Dorsolateral prefrontal cortex (tissue), 120 donors: ENCODE measurements at regions of chr12 and their contacts with region 1.

Region 1: GRCh38 chr12:57118711-57119271 is 7.6 kb upstream of the STAT6 start:
- DNase-seq: no peak
- H3K4me3 ChIP-seq: no peak overlapping the region
- H3K27ac ChIP-seq: no peak overlapping the region
- H3K27me3 ChIP-seq: no peaks in the 10 kb centered on the region
- CTCF ChIP-seq: no peak

Region 2: DNA sequence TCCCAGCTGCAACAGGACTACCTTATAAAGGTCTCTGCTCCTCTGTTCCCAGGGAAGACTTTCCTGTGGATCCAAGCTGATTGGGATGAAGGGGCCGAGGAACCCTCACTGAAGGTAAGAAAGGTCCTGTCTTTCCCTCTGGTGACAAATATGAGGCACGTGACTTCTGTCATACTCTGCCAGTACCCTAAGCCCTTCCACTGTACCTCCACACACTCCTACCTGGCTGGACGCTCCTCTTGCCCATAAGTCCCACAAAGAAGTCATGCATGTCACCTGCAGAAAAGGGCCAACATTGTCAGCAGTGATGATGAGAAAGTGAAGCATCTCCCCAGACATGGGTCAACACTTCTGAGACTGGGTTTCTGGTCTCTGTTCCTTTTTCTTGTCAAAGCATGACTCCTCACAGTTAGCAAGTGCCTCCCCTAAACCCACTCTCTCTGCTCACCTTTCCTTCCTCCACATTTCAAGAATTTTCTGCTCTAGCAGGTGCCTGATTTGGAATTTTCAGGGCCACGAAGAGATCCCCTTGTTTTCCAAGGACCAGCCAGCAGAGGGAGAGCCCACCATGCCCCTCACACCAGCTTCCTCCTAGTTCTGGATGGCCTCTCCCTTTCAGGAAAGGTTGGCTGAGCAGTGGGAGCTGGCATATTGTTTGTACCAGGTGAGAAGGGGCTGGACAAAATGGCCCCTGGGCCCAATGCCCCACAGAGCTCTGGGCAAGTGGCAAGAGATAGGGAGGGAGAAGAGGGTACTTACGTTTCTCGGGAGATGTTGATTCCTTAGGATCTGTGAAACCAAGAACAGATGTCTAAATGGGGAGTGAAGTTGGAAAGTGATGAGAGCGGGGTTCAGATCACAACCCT is 106.0 kb before region 1 on chr12:
- intact Hi-C with region 1: loop called in 1 of 2 experiments (anchors 5 kb)
- DNase-seq: no peak
- H3K4me3 ChIP-seq: no peak overlapping the region
- H3K27ac ChIP-seq: no peak overlapping the region
- H3K27me3 ChIP-seq: peaks cover 0 to 22% (median 0%) of the 10 kb centered on the region in 45 donors
- CTCF ChIP-seq: no peak